Right ventricle myocardium inferior (tissue), 1 donor: ENCODE measurements at regions of chr9 and their contacts with region 1.

Region 1: DNA sequence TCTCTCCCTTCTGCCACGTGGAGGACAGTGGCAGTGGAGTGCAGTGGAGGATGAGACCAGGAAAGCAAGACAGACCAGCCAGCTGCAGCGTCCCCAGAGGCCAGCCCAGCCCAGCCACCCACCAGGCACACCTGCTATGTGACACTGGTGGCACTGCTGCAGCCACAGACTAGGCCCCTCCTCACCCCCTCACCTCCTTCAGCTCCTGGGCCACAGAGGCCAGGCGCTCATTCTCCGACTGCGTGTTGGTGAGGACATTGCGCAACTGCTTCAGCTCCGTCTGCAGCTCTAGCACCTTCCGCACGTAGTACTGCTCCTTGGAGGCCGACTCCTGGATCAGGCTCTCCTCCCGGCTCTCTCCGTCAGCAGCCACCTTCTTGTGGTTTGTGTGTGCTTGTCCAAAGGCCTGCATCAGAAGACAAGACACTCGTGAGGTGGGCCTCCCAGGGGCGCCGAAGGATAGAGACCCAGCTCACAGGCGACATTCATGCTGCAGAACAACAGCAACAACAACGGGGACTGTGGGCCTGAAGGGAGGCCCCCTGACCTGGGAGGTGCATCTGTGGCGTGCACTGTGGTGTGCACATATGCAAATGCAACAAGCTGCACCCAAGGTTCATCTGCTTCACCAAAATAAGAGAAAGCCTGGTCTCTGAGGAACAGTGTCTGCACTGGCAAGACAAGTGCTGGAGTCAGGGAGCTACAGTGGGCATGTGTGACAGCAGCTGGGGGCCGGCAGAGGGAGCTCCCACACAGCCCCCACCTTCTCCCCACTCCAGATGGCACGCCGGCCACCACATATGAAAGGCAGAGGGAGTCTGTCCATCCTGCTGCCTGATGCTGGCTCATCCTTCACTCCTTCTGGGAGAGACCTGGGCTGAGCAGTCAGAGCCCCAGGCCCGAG is 35.5 kb downstream of the BICD2 start:
- DNase-seq: peak; percentile 69
- ATAC-seq: peak; percentile 47

Region 2: GRCh38 chr9:92747459-92748232 is 18.6 kb after region 1 on chr9:
- intact Hi-C with region 1: no loop called
- DNase-seq: no peak
- ATAC-seq: peak; percentile 32

Region 3: DNA sequence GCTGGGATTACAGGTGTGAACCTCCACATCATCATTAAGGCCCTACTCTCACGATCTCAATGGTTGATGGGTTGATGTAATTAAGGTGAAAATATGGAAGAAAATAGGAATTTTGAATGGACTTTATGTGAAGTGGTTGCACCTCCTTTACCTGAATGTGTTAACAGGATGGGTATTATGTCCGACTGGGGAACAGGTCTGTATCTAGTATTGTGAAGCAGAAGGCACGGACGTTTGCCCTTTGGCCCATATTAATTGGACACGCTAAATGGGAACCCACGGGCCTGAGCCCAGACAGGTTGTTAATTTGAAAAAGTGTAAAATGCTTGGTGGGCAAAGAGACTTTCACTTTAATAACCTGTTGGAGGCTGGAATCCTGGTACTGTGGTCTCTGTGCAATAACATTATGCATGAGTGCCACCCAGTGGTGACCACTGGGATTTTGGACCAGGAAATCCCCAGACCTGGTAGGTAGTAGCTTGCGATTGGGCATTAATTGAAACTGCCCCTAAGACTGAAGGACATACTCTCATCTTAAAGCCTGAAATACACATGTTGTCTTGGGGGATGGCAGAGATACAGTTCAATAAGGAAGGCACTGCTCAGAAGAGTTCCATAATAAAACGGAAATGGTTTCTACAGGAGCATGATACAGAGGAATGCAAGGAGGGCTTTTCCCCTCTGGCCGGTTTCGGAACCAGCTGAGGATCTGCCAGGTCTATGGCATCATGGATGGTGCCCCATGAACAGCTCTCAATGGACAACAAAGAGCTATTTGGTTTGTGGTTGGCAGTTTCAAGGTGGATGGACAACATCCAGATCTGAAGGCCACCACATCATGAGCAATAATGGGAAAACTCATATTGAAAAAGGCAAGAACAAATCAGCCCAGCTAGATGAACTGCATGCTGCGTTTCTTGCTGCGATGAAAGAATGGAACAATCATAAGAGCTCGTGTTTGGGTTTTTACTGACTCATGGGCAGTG is 61.8 kb after region 1 on chr9:
- intact Hi-C with region 1: loop called (anchors 1 kb)
- DNase-seq: peak; percentile 72
- ATAC-seq: peak; percentile 94